ENCODE measurements at regions of chr10 and their contacts with region 1.

Region 1: DNA sequence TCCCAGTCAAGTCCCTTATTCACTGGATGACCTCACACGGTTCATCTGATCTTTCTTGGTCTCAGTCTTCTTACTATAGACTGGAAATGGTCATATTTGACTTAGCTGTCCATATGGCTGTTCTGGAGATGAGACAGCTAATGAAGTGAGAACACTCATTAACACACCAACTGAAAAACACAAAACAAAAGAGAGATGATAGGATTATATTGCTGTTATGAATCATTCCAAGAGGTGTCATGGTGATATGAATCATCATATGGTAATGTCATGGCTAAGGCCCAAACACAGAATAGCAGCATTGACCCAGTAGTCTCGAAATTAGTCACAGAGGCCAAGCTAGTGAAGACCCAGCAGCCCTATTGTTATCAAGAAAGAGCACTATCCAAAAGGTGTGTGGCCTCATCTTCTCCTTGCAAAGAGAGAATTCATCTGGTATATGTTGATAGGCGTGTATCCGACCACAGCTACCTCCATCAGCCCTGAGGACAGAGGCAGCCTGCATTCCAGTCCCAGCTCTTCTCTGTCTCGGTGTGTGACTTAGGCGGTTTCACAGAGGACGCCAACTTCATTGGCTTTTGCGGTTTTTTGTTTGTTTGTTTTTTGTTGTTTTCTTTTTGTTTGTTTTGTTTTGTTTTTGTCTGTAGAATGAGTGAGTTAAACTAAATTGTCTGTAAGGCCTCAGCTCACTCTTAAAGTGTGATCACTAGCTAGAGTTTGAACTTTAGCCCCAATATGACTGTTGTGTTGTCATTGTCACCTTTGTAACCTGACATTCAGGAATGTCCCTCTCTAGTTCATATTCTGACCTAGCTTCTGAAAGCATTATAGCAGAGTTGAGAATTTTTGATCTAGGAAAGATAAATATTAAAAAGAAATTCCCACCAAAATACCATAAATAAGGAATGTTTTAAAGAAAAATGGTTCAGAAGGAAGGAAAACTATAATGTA is 97.4 kb upstream of the PDCD4 start:
- DNase-seq: peak; percentile 57
- H3K4me3 Mint-ChIP-seq: peak overlapping the region; percentile 53
- H3K27ac Mint-ChIP-seq: peak overlapping the region; percentile 96
- H3K4me1 Mint-ChIP-seq: peaks cover 62% of the 10 kb centered on the region
- H3K27me3 Mint-ChIP-seq: peaks cover 4% of the 10 kb centered on the region

Region 2: GRCh38 chr10:110279407-110279986 is 494.8 kb before region 1 on chr10:
- intact Hi-C with region 1: no loop called
- DNase-seq: peak; percentile 18
- H3K4me3 Mint-ChIP-seq: no peak overlapping the region
- H3K27ac Mint-ChIP-seq: no peak overlapping the region
- H3K4me1 Mint-ChIP-seq: peaks cover 20% of the 10 kb centered on the region
- H3K27me3 Mint-ChIP-seq: peaks cover 14% of the 10 kb centered on the region

Region 3: GRCh38 chr10:110363572-110364411 is 410.6 kb before region 1 on chr10:
- intact Hi-C with region 1: loop called (anchors 1 kb)
- DNase-seq: no peak
- H3K4me3 Mint-ChIP-seq: peak overlapping the region; percentile 34
- H3K27ac Mint-ChIP-seq: peak overlapping the region; percentile 83
- H3K4me1 Mint-ChIP-seq: peaks cover 84% of the 10 kb centered on the region
- H3K27me3 Mint-ChIP-seq: no peaks in the 10 kb centered on the region

Region 4: GRCh38 chr10:110528224-110528997 is 245.9 kb before region 1 on chr10:
- intact Hi-C with region 1: loop called (anchors 1 kb)
- DNase-seq: no peak
- H3K4me3 Mint-ChIP-seq: peak overlapping the region; percentile 64
- H3K27ac Mint-ChIP-seq: peak overlapping the region; percentile 94
- H3K4me1 Mint-ChIP-seq: peaks cover 83% of the 10 kb centered on the region
- H3K27me3 Mint-ChIP-seq: no peaks in the 10 kb centered on the region

Region 5: DNA sequence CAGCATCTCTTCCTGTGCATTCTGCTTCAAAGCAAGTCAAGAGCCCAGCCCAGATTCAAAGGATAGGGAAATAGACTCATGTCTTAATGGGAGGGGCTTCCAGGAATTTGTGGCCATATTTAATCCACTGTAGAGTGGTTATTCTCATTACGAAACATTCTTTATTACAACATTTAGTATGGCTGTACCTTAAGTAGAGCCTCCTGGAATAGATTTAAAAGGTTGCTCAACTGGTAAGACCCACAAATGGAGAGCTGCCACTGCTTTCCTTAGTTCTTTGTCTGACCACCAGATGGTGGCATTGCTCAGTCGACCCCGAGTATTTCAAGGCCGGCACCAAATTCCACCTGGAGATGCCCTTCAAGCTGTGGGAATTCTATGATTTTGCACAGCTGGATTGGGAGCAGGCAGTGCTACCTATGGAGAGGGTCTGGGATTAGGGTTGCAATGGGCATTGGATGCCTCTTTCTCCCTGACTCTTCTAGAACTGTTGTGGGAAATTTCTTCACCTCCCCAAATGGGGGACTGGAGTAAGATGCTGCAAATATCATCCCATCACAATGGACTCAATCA is 28.0 kb before region 1 on chr10:
- intact Hi-C with region 1: loop called (anchors 1 kb)
- DNase-seq: peak; percentile 19
- H3K4me3 Mint-ChIP-seq: no peak overlapping the region
- H3K27ac Mint-ChIP-seq: no peak overlapping the region
- H3K4me1 Mint-ChIP-seq: peaks cover 55% of the 10 kb centered on the region
- H3K27me3 Mint-ChIP-seq: no peaks in the 10 kb centered on the region

Region 6: GRCh38 chr10:110852255-110852896 is 78.0 kb after region 1 on chr10:
- intact Hi-C with region 1: loop called (anchors 2 kb)
- DNase-seq: no peak
- H3K4me3 Mint-ChIP-seq: peak overlapping the region; percentile 1
- H3K27ac Mint-ChIP-seq: peak overlapping the region; percentile 34
- H3K4me1 Mint-ChIP-seq: peaks cover 68% of the 10 kb centered on the region
- H3K27me3 Mint-ChIP-seq: no peaks in the 10 kb centered on the region

Region 7: DNA sequence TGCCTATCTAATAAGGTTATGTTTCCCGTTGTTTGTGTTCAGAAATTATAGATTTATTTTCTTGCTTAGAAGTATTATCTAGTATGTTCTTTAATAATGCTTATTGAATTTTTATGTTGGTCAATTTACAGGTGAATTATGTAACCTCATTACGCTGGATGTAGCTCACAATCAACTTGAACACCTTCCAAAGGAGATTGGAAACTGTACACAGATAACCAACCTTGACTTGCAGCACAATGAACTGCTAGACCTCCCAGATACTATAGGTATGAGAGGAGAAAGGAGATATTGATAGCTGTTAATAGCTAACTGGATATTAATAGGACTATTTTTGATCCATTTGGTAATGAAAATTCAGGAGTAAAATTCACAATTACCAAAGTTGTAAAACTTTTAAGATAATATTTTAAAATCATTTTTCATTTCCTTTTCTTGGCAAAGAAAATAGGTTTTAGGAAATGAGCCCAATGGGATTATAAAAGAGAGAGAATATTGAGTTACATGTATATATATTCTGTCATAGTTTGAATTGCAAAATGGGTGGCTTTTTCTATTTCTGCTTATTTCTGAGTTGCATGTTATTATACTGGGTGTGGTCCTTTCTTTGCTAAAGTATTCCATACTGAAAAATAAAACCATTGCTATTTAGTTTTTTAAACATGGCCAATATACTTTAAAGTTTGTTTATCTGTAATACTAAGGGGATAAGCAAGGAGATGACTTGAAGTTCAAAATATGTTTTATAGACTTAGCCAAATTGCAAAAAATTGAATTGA is 211.3 kb after region 1 on chr10:
- intact Hi-C with region 1: loop called (anchors 2 kb)
- DNase-seq: no peak
- H3K4me3 Mint-ChIP-seq: no peak overlapping the region
- H3K27ac Mint-ChIP-seq: no peak overlapping the region
- H3K4me1 Mint-ChIP-seq: peaks cover 28% of the 10 kb centered on the region
- H3K27me3 Mint-ChIP-seq: no peaks in the 10 kb centered on the region

Measured in activated T-helper 1 cell treated with anti-CD3 and anti-CD28 coated beads, Interleukin-12 subunit alpha, Interleukin-12 subunit beta, Interleukin-2, Interleukin-4 antibody, amounts not matched to agents 30 ng/mL and 10 ng/mL and 1 ng/mL, durations not matched to agents 14 hours and 24 hours and 36 hours (primary cell).